ENCODE measurements at regions of chr6 and their contacts with region 1.

Region 1: DNA sequence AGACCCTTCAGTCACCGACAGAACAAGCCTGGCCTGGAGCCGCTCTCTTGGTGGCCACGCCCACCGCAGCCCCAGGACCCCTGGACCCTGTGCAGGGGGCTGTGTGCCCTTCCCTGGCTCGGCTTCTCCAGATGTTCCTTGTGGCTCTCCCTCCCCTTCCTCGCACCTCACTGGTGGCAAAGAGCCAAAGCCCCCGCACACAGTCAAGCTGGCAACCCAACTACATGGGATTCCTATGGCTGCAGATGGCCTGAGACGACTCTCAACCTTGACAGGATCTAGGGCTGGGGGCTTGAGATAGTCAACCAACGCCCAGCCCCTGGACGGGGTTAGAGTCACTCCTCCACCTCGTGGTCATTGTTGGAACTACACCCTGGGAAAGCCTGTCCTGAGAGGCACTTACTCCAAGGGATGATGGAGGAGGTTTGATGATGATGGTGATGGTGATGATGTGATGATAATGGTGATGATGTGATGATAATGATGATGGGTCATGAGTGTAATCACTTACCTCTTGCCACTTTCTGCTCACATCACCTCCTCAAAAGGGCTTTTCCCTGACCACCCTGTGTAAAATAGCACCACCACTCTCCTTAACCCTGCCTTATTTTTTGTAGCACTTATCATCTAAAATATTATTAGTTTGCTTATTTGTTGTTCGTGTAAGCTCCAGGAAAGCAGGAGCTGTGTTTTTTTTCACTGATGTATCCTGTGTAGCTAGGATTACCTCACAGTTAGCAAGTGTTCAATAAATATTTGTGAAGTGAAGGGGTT is 278.4 kb downstream of the LRFN2 start:
- DNase-seq: peak; percentile 59
- H3K4me3 ChIP-seq: no peak overlapping the region
- H3K27ac ChIP-seq: no peak overlapping the region
- H3K4me1 ChIP-seq: no peaks in the 10 kb centered on the region
- CTCF ChIP-seq: peak; percentile 86

Region 2: DNA sequence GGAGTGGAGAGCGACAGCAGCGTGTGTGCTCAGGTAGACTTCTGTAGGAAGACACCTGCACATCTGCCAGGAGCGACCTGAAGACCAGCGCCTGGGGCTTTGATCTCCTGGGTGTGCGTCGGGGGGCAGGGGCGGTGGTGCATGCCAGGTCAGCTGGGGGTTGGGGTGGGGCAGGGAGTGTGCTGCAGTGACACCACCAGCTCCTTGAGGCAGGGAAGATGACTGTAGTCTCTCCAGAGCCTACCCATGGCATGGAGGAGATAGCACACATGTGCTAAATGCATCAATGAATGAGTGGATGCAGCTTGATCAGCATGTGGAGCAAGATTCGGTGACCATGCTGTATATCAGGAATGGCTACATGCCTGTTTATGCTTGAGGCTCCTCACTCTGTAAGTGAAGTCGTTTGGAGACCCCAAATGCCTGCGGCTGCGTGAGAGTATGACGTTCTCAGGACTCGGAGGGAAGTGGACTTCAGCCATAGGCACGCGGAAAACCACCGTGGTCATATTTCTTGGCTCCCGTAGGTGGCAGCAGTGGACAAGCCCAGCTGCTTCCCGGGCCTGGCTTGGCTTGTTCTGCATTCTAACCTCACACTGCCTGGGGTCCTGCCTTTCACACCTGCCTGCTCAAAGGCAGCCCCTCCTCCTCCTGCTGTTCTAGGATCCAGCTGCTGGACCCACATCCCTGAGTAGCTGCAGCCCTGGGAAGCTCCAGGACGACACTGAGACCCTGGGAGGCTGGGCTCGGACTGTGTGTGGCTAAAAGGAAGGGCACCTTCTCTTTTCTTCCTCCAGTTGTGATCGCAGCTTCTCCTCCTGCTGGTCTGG is 946.8 kb before region 1 on chr6:
- CTCF ChIA-PET with region 1: no interaction called
- POLR2A ChIA-PET with region 1: no interaction called
- intact Hi-C with region 1: loop called (anchors 2 kb)
- DNase-seq: peak; percentile 62
- H3K4me3 ChIP-seq: no peak overlapping the region
- H3K27ac ChIP-seq: no peak overlapping the region
- H3K4me1 ChIP-seq: no peaks in the 10 kb centered on the region
- CTCF ChIP-seq: peak; percentile 78

Region 3: GRCh38 chr6:39812853-39813533 is 495.7 kb before region 1 on chr6:
- CTCF ChIA-PET with region 1: no interaction called
- POLR2A ChIA-PET with region 1: no interaction called
- intact Hi-C with region 1: loop called (anchors 5 kb)
- DNase-seq: peak; percentile 92
- H3K4me3 ChIP-seq: peak overlapping the region; percentile 28
- H3K27ac ChIP-seq: peak overlapping the region; percentile 65
- H3K4me1 ChIP-seq: peaks cover 65% of the 10 kb centered on the region
- CTCF ChIP-seq: peak; percentile 79

Region 4: GRCh38 chr6:39980839-39981580 is 327.7 kb before region 1 on chr6:
- CTCF ChIA-PET with region 1: no interaction called
- POLR2A ChIA-PET with region 1: no interaction called
- intact Hi-C with region 1: loop called (anchors 5 kb)
- DNase-seq: peak; percentile 34
- H3K4me3 ChIP-seq: no peak overlapping the region
- H3K27ac ChIP-seq: no peak overlapping the region
- H3K4me1 ChIP-seq: no peaks in the 10 kb centered on the region
- CTCF ChIP-seq: peak; percentile 67

Measured in OCI-LY7 (cell line).